Tibial artery (tissue), 4 donors: ENCODE measurements at regions of chr6 and their contacts with region 1.

Region 1: GRCh38 chr6:86937219-86938079 is at the start of gene HTR1E:
- DNase-seq: no peak
- H3K4me3 ChIP-seq: peak within 1 kb of the TSS; percentile 19 to 34
- H3K27ac ChIP-seq: no peak within 1 kb of the TSS
- H3K4me1 ChIP-seq: peaks cover 0 to 13% (median 8%) of the 10 kb centered on the region in 4 donors
- H3K27me3 ChIP-seq: peaks cover 0 to 22% of the 10 kb centered on the region in 2 donors
- CTCF ChIP-seq: peak; percentile 18 to 24

Region 2: GRCh38 chr6:85126485-85127167 is 1810.8 kb before region 1 on chr6:
- intact Hi-C with region 1: no loop called
- DNase-seq: peak; percentile 57 to 81
- H3K4me3 ChIP-seq: peak overlapping the region; percentile 21 to 28
- H3K27ac ChIP-seq: peak overlapping the region in 1 of 2 donors; percentile 19
- H3K4me1 ChIP-seq: peaks cover 0 to 18% (median 4%) of the 10 kb centered on the region in 4 donors
- H3K27me3 ChIP-seq: no peaks in the 10 kb centered on the region
- CTCF ChIP-seq: peak; percentile 71 to 75

Region 3: GRCh38 chr6:85923013-85923430 is 1014.4 kb before region 1 on chr6:
- intact Hi-C with region 1: loop called (anchors 10 kb)
- DNase-seq: no peak
- H3K4me3 ChIP-seq: no peak overlapping the region
- H3K27ac ChIP-seq: no peak overlapping the region
- H3K4me1 ChIP-seq: no peaks in the 10 kb centered on the region
- H3K27me3 ChIP-seq: no peaks in the 10 kb centered on the region
- CTCF ChIP-seq: peak; percentile 60 to 61

Region 4: DNA sequence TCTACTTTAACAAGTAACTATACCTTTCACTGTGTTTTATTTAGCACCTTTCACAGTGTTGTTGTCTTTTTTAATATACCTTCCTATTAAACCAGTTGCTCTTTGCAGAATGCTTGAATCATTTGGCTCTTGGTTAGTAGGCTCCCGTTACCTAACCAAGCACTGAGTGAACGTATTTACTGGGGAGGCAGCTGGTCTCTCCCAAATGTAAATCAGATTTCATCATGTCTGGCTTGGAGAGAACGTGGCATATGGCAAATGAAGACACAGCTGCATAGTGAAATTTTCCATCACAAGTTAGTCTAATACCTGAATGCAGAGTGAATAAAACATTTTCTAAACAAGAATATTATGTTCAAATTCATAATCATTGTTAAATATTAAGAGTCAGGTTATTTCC is 12.3 kb after region 1 on chr6:
- intact Hi-C with region 1: no loop called
- DNase-seq: no peak
- H3K4me3 ChIP-seq: no peak overlapping the region
- H3K27ac ChIP-seq: no peak overlapping the region
- H3K4me1 ChIP-seq: no peaks in the 10 kb centered on the region
- H3K27me3 ChIP-seq: no peaks in the 10 kb centered on the region
- CTCF ChIP-seq: no peak

Region 5: GRCh38 chr6:87016772-87017171 is 79.3 kb after region 1 on chr6:
- intact Hi-C with region 1: no loop called
- DNase-seq: no peak
- H3K4me3 ChIP-seq: no peak overlapping the region
- H3K27ac ChIP-seq: no peak overlapping the region
- H3K4me1 ChIP-seq: no peaks in the 10 kb centered on the region
- H3K27me3 ChIP-seq: no peaks in the 10 kb centered on the region
- CTCF ChIP-seq: no peak